GM23248 (cell line): ENCODE measurements at regions of chr15 and their contacts with region 1.

Region 1: GRCh38 chr15:41820791-41821423 is 7.0 kb upstream of the JMJD7 start:
- DNase-seq: no peak
- H3K4me3 ChIP-seq: no peak overlapping the region
- H3K27ac ChIP-seq: no peak overlapping the region
- H3K4me1 ChIP-seq: no peaks in the 10 kb centered on the region
- H3K27me3 ChIP-seq: no peaks in the 10 kb centered on the region

Region 2: DNA sequence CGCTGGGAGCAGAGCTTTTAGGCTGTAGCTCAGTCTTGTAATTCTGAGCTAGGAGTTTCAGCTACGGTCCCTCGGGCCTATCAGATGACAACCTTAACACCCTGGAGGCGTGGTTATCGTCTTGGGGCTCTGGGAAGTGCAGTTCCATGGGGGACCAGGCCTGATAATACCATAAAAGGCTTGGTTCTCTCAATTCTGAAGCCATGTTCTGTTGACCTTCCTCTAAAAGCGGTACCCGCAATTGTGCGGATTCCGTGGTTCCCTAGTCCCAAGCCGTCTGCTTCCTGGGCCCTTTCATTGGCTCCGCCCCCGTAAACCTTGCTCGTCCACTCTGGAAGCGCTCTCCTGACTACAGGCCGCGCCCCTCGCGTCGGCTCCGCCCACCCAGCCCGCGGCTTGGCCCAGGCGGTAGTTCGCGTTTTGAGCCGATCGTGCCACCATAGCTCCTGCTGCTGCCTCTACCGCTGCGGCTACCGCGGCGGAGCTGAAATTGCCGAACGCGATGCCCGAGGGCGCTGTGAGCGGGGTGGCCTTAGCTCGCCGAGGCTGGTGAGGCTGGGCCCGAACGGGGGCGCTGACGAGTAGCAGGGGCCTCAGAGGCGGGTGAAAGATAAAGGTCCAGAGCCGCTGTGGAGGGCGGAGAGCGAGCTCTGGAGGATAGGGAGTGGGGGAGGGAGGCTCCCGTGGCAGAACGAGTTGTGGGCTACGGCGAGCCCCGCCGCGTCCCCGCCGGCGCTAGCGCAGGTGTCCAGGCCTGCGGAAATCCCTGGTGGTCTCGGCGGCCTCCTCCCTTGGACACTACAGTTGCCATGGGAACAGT is 46.6 kb before region 1 on chr15 and contains the start of gene MAPKBP1:
- in situ Hi-C with region 1: loop called (anchors 5 kb)
- DNase-seq: peak; percentile 99
- H3K4me3 ChIP-seq: peak within 1 kb of the TSS; percentile 86
- H3K27ac ChIP-seq: peak within 1 kb of the TSS; percentile 75
- H3K4me1 ChIP-seq: peaks cover 52% of the 10 kb centered on the region
- H3K27me3 ChIP-seq: no peaks in the 10 kb centered on the region
- total RNA-seq, gene MAPKBP1: 8.5 and 12.3 TPM in 2 replicates